Lower leg skin (tissue), 4 donors: ENCODE measurements at regions of chr15 and their contacts with region 1.

Region 1: DNA sequence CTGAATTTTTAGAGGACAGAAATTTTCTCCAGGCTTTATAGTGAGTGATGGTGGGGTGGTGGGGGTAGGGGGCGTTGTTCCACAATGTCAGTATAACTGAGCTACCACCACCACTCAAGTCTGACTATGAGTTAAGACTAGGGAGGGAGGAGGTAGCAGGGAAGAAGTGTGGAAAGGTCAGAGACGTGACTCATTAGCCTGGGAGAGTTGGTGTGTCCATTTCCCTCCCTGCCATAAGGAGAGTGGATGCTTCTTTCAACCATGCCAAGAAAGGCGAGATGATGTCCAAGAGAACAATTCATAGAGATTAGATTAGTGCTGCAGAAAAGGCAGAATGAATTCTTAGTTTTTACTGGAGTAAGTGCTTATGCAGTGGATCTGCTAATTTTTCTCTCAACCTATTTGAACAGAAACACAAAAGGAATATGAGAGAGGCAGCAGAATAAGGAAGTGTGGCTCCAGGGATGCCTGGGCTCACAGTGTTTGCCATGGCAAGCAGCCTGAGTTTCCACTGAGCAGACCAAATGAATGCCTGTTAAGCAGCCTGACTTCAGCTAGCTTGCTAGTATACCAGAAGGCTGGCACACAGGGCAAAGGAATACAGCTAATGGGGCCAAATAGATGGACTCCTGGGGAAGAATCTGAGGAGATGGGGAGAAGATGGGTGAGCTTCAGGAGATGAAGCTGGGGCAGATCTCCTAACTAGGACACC is 708.9 kb downstream of the NTRK3 start:
- DNase-seq: no peak
- H3K4me3 ChIP-seq: no peak overlapping the region
- CTCF ChIP-seq: no peak
- POLR2A ChIP-seq: no peak

Region 2: DNA sequence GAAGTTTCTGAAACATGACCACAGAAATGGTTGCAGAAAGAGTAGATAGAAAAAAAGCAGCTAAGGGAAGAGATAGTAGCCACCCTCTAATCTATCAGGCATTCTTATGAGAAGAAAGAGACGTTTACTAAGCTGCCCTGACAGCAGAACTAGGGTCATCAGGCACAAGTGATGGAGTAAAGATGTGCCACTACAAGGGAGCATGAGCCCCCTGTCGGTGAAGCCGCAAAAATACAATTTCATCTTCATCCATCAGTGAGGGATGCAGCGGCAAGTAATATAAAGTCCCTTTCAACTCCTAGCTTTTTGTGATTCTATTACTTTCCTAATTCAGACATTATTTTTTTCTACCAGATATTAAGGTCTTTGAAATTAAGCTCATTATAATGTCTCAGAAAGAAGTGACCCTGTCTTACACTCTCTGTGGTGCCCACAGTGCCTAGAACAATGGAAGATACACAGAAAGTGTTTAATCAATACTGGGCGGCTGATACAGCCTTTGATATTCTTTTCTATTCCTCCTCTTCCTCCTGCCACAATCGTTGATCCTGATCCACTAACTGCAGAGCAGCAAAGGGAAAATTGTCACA is 57.3 kb after region 1 on chr15:
- intact Hi-C with region 1: loop called (anchors 10 kb)
- DNase-seq: no peak
- H3K4me3 ChIP-seq: no peak overlapping the region
- CTCF ChIP-seq: no peak
- POLR2A ChIP-seq: no peak

Region 3: GRCh38 chr15:87781959-87782625 is 234.5 kb after region 1 on chr15:
- intact Hi-C with region 1: no loop called
- DNase-seq: no peak
- H3K4me3 ChIP-seq: no peak overlapping the region
- CTCF ChIP-seq: no peak
- POLR2A ChIP-seq: no peak